Dendritic cell treated with granulocyte-macrophage colony-stimulating factor and Interleukin-4, amounts not matched to agents 40 ng/mL and 50 ng/mL, for 4 days (primary cell): ENCODE measurements at regions of chr9 and their contacts with region 1.

Region 1: GRCh38 chr9:71716138-71716909 is 52.0 kb downstream of the CEMIP2 start:
- H3K4me3 Mint-ChIP-seq: no peak overlapping the region
- H3K27ac Mint-ChIP-seq: no peak overlapping the region
- H3K4me1 Mint-ChIP-seq: peaks cover 10% of the 10 kb centered on the region
- H3K27me3 Mint-ChIP-seq: no peaks in the 10 kb centered on the region

Region 2: GRCh38 chr9:71604197-71605063 is 111.9 kb before region 1 on chr9:
- intact Hi-C with region 1: loop called (anchors 2 kb)
- H3K4me3 Mint-ChIP-seq: no peak overlapping the region
- H3K27ac Mint-ChIP-seq: no peak overlapping the region
- H3K4me1 Mint-ChIP-seq: no peaks in the 10 kb centered on the region
- H3K27me3 Mint-ChIP-seq: no peaks in the 10 kb centered on the region

Region 3: DNA sequence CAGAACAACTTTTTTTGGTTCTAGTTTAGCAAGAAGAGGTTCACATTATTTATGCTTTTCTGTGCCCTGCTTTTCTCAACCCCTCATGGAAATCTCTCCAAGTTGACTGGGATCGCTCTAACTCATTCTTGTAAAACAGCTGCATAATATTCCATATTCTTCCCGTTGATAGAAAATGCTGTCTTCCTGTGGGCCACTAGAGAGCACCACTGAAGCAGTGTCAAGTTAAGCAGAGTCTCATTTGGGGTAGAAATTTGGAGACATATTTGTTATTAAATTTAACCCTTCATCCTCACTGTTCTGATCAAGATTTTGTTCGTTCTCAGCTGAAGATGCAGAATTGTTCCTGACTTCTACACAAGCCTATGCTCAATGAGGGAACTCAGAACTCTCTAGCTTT is 88.1 kb before region 1 on chr9:
- intact Hi-C with region 1: loop called (anchors 1 kb)
- H3K4me3 Mint-ChIP-seq: no peak overlapping the region
- H3K27ac Mint-ChIP-seq: no peak overlapping the region
- H3K4me1 Mint-ChIP-seq: peaks cover 14% of the 10 kb centered on the region
- H3K27me3 Mint-ChIP-seq: peaks cover 5% of the 10 kb centered on the region

Region 4: DNA sequence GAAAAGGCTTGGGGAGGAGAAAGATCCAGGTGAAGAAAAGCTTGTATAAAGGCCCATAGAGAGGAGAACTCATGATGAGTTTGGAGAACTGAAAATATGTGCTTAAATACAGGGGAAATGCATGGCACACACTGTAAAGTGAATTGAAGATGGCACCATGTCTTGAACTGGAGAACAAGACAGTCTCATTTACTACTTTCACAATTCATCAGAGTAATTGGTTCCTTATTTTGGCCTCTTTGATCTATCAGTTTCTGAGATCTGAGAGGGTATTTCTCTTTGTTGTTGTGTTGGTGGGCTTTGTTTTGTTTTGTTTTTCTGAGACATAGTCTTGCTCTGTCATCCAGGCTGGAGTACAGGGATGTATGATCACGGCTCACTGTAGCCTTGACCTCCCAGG is 46.2 kb before region 1 on chr9:
- intact Hi-C with region 1: no loop called
- H3K4me3 Mint-ChIP-seq: no peak overlapping the region
- H3K27ac Mint-ChIP-seq: peak overlapping the region; percentile 31
- H3K4me1 Mint-ChIP-seq: peaks cover 40% of the 10 kb centered on the region
- H3K27me3 Mint-ChIP-seq: no peaks in the 10 kb centered on the region

Region 5: DNA sequence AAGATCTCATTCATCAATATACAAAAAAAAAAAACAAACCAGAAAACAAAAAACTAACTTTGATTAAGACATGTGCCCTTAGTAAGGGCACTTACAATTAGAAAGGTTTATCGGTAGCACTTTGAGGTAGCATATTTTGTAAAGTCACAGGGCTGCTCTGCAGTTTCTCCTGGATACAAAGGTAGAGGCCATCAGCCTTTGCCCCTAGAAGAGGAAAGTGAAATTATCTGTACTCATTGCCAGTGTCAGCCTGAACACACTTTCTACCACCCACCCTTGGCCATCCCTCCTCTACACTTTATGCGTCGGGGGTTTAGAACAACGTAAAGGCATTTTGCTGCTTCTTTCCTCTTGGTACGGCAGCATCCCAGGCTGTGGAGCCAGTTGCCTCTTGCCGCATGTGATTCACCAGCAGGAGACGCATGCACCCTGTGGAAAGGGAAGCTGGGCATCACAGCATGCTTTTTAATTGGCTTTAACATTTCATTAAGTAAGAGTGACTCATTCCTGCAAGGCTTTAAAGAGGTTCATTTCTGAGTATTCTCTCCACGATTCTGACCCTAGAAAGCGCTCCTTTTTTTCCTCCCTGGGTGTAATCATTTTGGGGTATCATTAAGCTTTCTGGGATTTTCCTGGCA is 32.6 kb before region 1 on chr9:
- intact Hi-C with region 1: loop called (anchors 5 kb)
- H3K4me3 Mint-ChIP-seq: no peak overlapping the region
- H3K27ac Mint-ChIP-seq: peak overlapping the region; percentile 68
- H3K4me1 Mint-ChIP-seq: peaks cover 51% of the 10 kb centered on the region
- H3K27me3 Mint-ChIP-seq: peaks cover 3% of the 10 kb centered on the region

Region 6: GRCh38 chr9:71768388-71769174 is 52.3 kb after region 1 on chr9 and contains the start of gene CEMIP2:
- intact Hi-C with region 1: no loop called
- H3K4me3 Mint-ChIP-seq: peak within 1 kb of the TSS; percentile 90
- H3K27ac Mint-ChIP-seq: peak within 1 kb of the TSS; percentile 90
- H3K4me1 Mint-ChIP-seq: peaks cover 52% of the 10 kb centered on the region
- H3K27me3 Mint-ChIP-seq: peaks cover 23% of the 10 kb centered on the region

Region 7: DNA sequence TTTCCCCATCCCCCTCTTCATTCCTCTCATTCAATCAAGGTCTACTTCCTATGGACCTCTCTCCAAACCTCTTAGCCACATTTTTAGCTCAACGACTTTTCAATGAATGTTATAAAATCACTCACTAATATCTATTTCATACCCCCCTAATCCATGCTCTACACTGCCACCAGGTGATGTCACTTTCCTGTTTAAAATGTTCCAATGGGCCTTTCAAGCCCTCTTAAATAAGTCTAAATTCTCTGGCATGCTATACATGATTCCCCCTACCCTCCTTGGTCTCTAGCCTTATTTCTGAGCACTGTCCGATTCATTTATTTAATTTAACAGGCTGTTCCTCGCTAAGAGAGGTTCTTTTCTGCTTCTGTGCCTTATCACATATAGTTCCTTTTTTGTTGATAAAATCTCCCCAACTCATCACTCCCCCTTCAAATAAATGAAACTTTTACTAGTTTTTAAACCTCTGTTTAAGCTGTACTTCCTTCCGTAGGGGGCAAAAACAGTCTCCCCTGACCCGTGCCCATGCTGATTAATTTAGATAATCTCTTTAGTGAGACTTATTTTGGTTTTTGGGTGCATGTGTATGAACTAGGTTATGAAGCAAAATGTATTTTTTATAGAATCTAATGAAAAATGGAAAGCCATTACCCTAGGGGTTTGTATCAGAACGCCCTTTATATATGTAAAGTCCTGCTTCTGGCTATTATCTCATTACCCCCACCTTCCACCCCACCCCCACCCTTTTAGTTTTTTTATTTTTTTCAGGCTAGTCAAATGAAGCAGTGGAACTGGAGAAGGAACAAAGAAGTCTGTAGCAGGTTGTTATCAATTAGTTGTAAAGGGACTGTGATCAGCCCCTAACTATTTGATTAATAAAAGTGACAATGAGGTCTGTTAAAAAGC is 185.6 kb after region 1 on chr9:
- intact Hi-C with region 1: no loop called
- H3K4me3 Mint-ChIP-seq: no peak overlapping the region
- H3K27ac Mint-ChIP-seq: peak overlapping the region; percentile 7
- H3K4me1 Mint-ChIP-seq: peaks cover 56% of the 10 kb centered on the region
- H3K27me3 Mint-ChIP-seq: no peaks in the 10 kb centered on the region